ENCODE measurements at regions of chr12 and their contacts with region 1.

Region 1: GRCh38 chr12:27747111-27747820 is 32.8 kb upstream of the KLHL42 start:
- DNase-seq: no peak
- ATAC-seq: no peak
- H3K4me3 ChIP-seq: no peak overlapping the region
- H3K27ac ChIP-seq: peak overlapping the region in 1 of 2 donors; percentile 82
- H3K4me1 ChIP-seq: peaks cover 0 to 6% of the 10 kb centered on the region in 2 donors
- H3K27me3 ChIP-seq: no peaks in the 10 kb centered on the region

Region 2: GRCh38 chr12:27779920-27780611 is 32.8 kb after region 1 on chr12 and contains the starts of genes KLHL42 and MANSC4:
- intact Hi-C with region 1: loop called in 1 of 2 experiments (anchors 1 kb)
- DNase-seq: peak; percentile 87 to 94
- ATAC-seq: peak; percentile 93
- H3K4me3 ChIP-seq: peak within 1 kb of the TSS; percentile 36 to 88
- H3K27ac ChIP-seq: peak within 1 kb of the TSS; percentile 98 to 100
- H3K4me1 ChIP-seq: peaks cover 2% of the 10 kb centered on the region in 2 donors
- H3K27me3 ChIP-seq: no peaks in the 10 kb centered on the region
- total RNA-seq, gene KLHL42: 57.3 to 58.7 TPM
- total RNA-seq, gene MANSC4: not detected

Region 3: DNA sequence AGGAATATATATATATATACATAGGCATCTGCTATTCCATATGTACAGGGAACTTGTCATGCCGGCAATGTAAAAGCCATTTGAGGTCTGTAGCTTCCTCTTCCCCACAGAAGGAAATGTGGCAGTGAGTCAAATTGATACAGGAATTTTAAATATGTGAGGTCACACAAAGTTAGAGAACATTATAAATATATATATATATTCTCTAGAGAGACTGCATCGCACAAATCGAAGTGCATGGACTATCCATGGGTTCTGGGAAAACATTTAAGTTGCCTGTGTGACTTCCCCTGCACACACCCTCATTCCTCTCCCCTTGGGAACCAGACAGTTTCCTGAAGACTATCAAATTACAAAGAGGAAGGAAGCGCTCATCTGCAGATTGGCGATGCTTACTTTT is 342.1 kb after region 1 on chr12:
- intact Hi-C with region 1: loop called in 1 of 2 experiments (anchors 10 kb)
- DNase-seq: no peak
- ATAC-seq: no peak
- H3K4me3 ChIP-seq: no peak overlapping the region
- H3K27ac ChIP-seq: no peak overlapping the region
- H3K4me1 ChIP-seq: peaks cover 2 to 5% of the 10 kb centered on the region in 2 donors
- H3K27me3 ChIP-seq: no peaks in the 10 kb centered on the region

Region 4: DNA sequence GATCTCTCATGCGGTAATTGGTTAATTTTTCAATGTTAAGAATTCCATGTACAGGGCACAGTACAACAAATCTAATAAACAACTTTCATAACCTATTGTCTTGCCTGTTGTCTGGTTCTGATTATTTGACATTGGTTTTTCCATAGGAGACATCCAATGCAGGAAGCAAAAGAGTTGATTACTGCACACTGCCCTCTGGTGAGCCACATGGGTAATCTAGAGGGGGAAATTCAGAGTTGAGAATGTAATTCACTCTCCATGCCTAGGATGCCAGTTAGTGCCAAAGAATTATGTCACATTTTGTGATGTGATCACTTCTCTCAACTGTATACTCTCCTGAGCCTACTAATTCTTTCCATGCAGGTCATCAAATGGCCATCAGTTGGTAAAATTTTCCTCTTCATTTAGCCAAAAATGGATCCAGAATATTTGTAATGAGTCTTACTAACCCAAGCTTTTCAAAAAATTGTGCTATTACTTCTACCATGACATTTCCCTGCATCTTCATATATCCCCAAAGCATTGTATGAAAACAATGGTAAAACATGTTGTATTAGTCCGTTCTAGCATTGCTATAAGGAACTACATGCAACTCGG is 425.3 kb after region 1 on chr12:
- intact Hi-C with region 1: loop called in 1 of 2 experiments (anchors 10 kb)
- DNase-seq: no peak
- ATAC-seq: peak; percentile 70
- H3K4me3 ChIP-seq: no peak overlapping the region
- H3K27ac ChIP-seq: no peak overlapping the region
- H3K4me1 ChIP-seq: no peaks in the 10 kb centered on the region
- H3K27me3 ChIP-seq: peaks cover 0 to 1% of the 10 kb centered on the region in 2 donors

Measured in aorta (tissue), 5 donors.